H1 (cell line): ENCODE measurements at regions of chr1 and their contacts with region 1.

Region 1: DNA sequence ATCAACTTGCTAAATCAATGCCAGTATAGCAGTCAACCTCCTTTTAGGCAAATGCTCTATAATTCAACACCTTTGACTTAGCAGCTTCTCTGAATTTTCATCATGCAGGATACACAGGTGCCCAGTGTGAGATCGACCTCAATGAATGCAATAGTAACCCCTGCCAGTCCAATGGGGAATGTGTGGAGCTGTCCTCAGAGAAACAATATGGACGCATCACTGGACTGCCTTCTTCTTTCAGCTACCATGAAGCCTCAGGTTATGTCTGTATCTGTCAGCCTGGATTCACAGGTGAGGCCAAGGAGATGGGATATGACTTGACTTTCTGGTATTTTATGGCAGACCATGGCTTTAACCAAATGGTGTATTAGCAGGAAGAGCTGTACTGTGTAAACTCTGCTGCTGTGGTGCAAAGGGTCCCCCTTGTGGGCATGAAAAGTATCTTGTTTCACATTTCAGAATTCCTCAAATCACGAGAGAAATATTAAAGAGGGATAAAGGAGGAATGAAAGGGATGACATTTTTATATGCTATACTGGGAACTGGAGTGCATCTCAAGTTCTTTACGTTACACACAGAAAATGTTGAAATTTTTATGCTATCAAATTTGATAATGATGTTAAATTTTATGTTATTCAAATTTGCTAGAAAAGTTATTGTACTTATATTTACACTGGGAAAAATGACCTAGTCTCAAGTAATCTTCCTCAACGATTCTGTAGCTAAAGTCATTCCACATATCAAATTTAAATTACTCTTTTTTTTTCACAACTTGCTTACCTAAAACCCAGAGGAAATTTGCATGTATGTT is 88.9 kb downstream of the CRB1 start:
- DNase-seq: no peak
- H3K4me3 ChIP-seq: no peak overlapping the region
- H3K27ac ChIP-seq: no peak overlapping the region
- H3K4me1 ChIP-seq: no peaks in the 10 kb centered on the region; a peak in 1 of 7 replicates
- H3K27me3 ChIP-seq: no peaks in the 10 kb centered on the region
- CTCF ChIP-seq: peak in 2 of 3 experiments; percentile 69 to 78; a peak in 3 of 4 replicates
- EP300 ChIP-seq: no peak
- POLR2A ChIP-seq: no peak
- RAD21 ChIP-seq: peak; percentile 91

Region 2: DNA sequence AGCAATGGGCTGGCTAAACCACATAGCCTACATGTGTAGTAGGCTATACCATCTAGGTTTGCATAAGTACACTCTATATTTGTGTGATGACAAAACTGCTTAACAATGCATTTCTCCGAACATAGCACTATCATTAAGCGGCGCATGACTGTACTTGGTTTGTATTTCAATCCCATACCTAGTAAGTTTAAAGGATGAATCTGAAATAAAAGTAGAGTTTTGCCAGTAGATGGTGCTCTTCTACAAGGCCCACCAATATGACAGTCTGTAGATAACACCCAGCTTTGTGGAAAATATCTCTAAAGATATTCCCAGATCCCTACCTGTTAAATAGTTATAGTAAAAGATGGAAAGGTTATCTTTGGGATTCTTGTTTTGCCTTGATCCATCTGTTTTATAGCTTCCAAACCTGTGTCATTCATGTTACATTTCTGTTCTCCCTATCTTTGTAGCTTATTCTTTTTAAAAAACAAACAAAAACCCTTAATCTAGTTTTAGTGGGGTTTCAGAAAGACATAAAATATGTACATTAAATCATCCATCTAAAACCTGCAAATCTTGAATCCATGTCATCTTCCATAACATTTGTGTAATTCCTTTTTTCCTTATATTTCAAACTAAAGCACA is 176.6 kb before region 1 on chr1:
- CTCF ChIA-PET with region 1: interaction called, 47 read pairs
- POLR2A ChIA-PET with region 1: no interaction called
- DNase-seq: no peak
- H3K4me3 ChIP-seq: no peak overlapping the region
- H3K27ac ChIP-seq: no peak overlapping the region
- H3K4me1 ChIP-seq: no peaks in the 10 kb centered on the region
- H3K27me3 ChIP-seq: no peaks in the 10 kb centered on the region
- CTCF ChIP-seq: peak in 2 of 3 experiments; percentile 54 to 59; a peak in 2 of 4 replicates
- EP300 ChIP-seq: no peak
- POLR2A ChIP-seq: no peak
- RAD21 ChIP-seq: peak; percentile 78 to 79

Region 3: GRCh38 chr1:197327776-197328364 is 29.1 kb before region 1 on chr1:
- CTCF ChIA-PET with region 1: interaction called, 25 read pairs
- POLR2A ChIA-PET with region 1: no interaction called
- DNase-seq: no peak
- H3K4me3 ChIP-seq: no peak overlapping the region
- H3K27ac ChIP-seq: no peak overlapping the region
- H3K4me1 ChIP-seq: no peaks in the 10 kb centered on the region
- H3K27me3 ChIP-seq: no peaks in the 10 kb centered on the region
- CTCF ChIP-seq: peak in 2 of 3 experiments; percentile 34 to 35; a peak in 2 of 4 replicates
- EP300 ChIP-seq: no peak
- POLR2A ChIP-seq: no peak
- RAD21 ChIP-seq: peak; percentile 44

Region 4: GRCh38 chr1:197343663-197344273 is 13.2 kb before region 1 on chr1:
- CTCF ChIA-PET with region 1: interaction called, 13 read pairs
- POLR2A ChIA-PET with region 1: interaction called, 3 read pairs
- DNase-seq: no peak
- H3K4me3 ChIP-seq: no peak overlapping the region
- H3K27ac ChIP-seq: no peak overlapping the region
- H3K4me1 ChIP-seq: no peaks in the 10 kb centered on the region
- H3K27me3 ChIP-seq: no peaks in the 10 kb centered on the region
- CTCF ChIP-seq: no peak
- EP300 ChIP-seq: no peak
- POLR2A ChIP-seq: no peak
- RAD21 ChIP-seq: no peak